HepG2 (cell line): ENCODE measurements at regions of chr22 and their contacts with region 1.

Region 1: GRCh38 chr22:19291580-19292457 is at the start of gene CLTCL1:
- DNase-seq: peak; percentile 46
- ATAC-seq: peak; percentile 67
- H3K4me3 ChIP-seq: peak within 1 kb of the TSS; percentile 76 to 95 (median 86)
- H3K27ac ChIP-seq: peak within 1 kb of the TSS; percentile 66
- H3K4me1 ChIP-seq: peaks cover 35% of the 10 kb centered on the region
- H3K27me3 ChIP-seq: no peaks in the 10 kb centered on the region; a peak in 1 of 5 replicates
- CTCF ChIP-seq: peak; percentile 7; the same call in 1 of the 2 replicates
- EP300 ChIP-seq: no peak
- POLR2A ChIP-seq: peak; percentile 50 to 74
- RAD21 ChIP-seq: peak; percentile 29; the same call in 1 of the 2 replicates
- total RNA-seq, gene CLTCL1: 7.1 and 8.1 TPM in 2 replicates

Region 2: GRCh38 chr22:19143967-19144400 is 147.8 kb before region 1 on chr22:
- CTCF ChIA-PET with region 1: no interaction called
- POLR2A ChIA-PET with region 1: no interaction called
- in situ Hi-C with region 1: no loop called
- intact Hi-C with region 1: loop called (anchors 1 kb)
- DNase-seq: no peak
- ATAC-seq: no peak
- H3K4me3 ChIP-seq: peak overlapping the region; percentile 83 to 95 (median 90)
- H3K27ac ChIP-seq: peak overlapping the region; percentile 31
- H3K4me1 ChIP-seq: peaks cover 17% of the 10 kb centered on the region
- H3K27me3 ChIP-seq: peaks cover 4 to 31% of the 10 kb centered on the region in 2 experiments; a peak in 3 of 5 replicates
- CTCF ChIP-seq: no peak
- EP300 ChIP-seq: no peak
- POLR2A ChIP-seq: no peak
- RAD21 ChIP-seq: no peak

Region 3: DNA sequence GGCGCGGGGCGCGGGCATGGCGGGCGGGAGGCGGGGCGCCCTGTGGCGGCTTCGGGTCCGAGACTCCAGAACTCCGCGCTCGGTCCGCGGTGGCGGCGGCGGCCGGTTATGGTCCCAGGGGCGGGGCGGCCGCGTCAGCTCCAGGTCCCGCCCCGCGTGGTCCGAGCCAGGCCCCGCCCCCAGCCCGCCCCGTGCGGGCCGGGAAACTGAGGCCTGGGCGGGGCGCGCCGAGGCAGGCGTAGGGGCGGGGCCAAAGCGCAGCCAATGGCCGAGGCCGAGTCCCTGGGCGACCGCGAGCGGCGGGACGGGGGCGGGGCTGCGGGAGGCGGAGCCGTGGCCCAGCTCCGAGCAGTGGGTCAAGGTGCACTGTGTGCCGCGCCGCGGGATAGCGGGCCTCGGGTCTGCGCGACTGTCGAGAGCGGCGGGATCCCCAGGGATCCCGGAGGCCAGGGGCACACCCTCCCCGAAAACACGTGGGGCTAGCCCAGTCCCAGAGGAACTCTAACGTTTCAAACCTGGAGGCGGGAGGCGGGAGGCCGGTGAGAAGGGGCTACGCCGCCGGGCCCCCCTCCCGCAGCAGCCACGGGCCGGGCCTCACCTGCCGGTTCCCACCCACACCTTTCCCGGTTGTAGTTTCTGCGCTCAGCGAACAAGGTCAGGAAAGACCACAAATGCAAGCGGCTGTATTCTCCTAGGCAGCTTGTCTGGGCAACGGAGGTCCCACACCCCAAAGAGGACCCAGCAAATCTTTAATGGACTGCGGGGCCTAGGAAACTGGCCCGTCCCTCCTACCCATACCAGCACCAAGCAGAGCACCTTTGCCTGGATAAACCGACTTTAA is 112.9 kb before region 1 on chr22 and contains the start of gene SLC25A1:
- CTCF ChIA-PET with region 1: no interaction called
- POLR2A ChIA-PET with region 1: interaction called, 16 read pairs
- in situ Hi-C with region 1: loop called (anchors 5 kb)
- intact Hi-C with region 1: loop called (anchors 1 kb)
- DNase-seq: peak; percentile 83
- ATAC-seq: peak; percentile 76
- H3K4me3 ChIP-seq: peak within 1 kb of the TSS; percentile 80 to 94 (median 92)
- H3K27ac ChIP-seq: peak within 1 kb of the TSS; percentile 95
- H3K4me1 ChIP-seq: peaks cover 54% of the 10 kb centered on the region
- H3K27me3 ChIP-seq: no peaks in the 10 kb centered on the region
- CTCF ChIP-seq: no peak
- EP300 ChIP-seq: 0 out of 4 replicates have a peak, but pooled peaks have one; percentile 9 to 10
- POLR2A ChIP-seq: peak in 1 of 2 experiments; percentile 93; a peak in 2 of 4 replicates
- RAD21 ChIP-seq: no peak; the same call in 1 of the 2 replicates
- total RNA-seq, gene SLC25A1: 118 and 161 TPM in 2 replicates

Region 4: GRCh38 chr22:19271856-19272535 is 19.8 kb before region 1 on chr22:
- CTCF ChIA-PET with region 1: no interaction called
- POLR2A ChIA-PET with region 1: interaction called, 10 read pairs
- in situ Hi-C with region 1: no loop called
- intact Hi-C with region 1: no loop called
- DNase-seq: peak; percentile 89
- ATAC-seq: peak; percentile 98
- H3K4me3 ChIP-seq: no peak overlapping the region
- H3K27ac ChIP-seq: peak overlapping the region; percentile 81
- H3K4me1 ChIP-seq: peaks cover 33% of the 10 kb centered on the region
- H3K27me3 ChIP-seq: no peaks in the 10 kb centered on the region
- CTCF ChIP-seq: no peak
- EP300 ChIP-seq: no peak
- POLR2A ChIP-seq: no peak
- RAD21 ChIP-seq: no peak

Region 5: GRCh38 chr22:19432133-19432851 is 140.5 kb after region 1 on chr22 and contains the start of gene MRPL40:
- CTCF ChIA-PET with region 1: no interaction called
- POLR2A ChIA-PET with region 1: interaction called, 13 read pairs
- in situ Hi-C with region 1: no loop called
- intact Hi-C with region 1: no loop called
- DNase-seq: peak; percentile 86
- ATAC-seq: peak; percentile 92
- H3K4me3 ChIP-seq: peak within 1 kb of the TSS; percentile 86 to 91 (median 88)
- H3K27ac ChIP-seq: peak within 1 kb of the TSS; percentile 97
- H3K4me1 ChIP-seq: peaks cover 38% of the 10 kb centered on the region
- H3K27me3 ChIP-seq: no peaks in the 10 kb centered on the region; a peak in 1 of 5 replicates
- CTCF ChIP-seq: peak; percentile 49
- EP300 ChIP-seq: peak; percentile 39 to 62; a peak in 1 of 4 replicates
- POLR2A ChIP-seq: peak; percentile 93 to 96
- RAD21 ChIP-seq: peak; percentile 69
- total RNA-seq, gene MRPL40: 79.7 and 107 TPM in 2 replicates

Region 6: GRCh38 chr22:19629720-19630419 is 338.1 kb after region 1 on chr22:
- CTCF ChIA-PET with region 1: no interaction called
- POLR2A ChIA-PET with region 1: no interaction called
- in situ Hi-C with region 1: loop called (anchors 10 kb)
- intact Hi-C with region 1: no loop called
- DNase-seq: peak; percentile 65
- ATAC-seq: peak; percentile 86
- H3K4me3 ChIP-seq: no peak overlapping the region
- H3K27ac ChIP-seq: no peak overlapping the region
- H3K4me1 ChIP-seq: peaks cover 12% of the 10 kb centered on the region; the same call in 1 of the 2 replicates
- H3K27me3 ChIP-seq: peaks cover 5 to 29% of the 10 kb centered on the region in 2 experiments; a peak in 4 of 5 replicates
- CTCF ChIP-seq: peak; percentile 97
- EP300 ChIP-seq: no peak
- POLR2A ChIP-seq: no peak
- RAD21 ChIP-seq: peak; percentile 91